SK-N-SH (cell line): ENCODE measurements at regions of chr22 and their contacts with region 1.

Region 1: DNA sequence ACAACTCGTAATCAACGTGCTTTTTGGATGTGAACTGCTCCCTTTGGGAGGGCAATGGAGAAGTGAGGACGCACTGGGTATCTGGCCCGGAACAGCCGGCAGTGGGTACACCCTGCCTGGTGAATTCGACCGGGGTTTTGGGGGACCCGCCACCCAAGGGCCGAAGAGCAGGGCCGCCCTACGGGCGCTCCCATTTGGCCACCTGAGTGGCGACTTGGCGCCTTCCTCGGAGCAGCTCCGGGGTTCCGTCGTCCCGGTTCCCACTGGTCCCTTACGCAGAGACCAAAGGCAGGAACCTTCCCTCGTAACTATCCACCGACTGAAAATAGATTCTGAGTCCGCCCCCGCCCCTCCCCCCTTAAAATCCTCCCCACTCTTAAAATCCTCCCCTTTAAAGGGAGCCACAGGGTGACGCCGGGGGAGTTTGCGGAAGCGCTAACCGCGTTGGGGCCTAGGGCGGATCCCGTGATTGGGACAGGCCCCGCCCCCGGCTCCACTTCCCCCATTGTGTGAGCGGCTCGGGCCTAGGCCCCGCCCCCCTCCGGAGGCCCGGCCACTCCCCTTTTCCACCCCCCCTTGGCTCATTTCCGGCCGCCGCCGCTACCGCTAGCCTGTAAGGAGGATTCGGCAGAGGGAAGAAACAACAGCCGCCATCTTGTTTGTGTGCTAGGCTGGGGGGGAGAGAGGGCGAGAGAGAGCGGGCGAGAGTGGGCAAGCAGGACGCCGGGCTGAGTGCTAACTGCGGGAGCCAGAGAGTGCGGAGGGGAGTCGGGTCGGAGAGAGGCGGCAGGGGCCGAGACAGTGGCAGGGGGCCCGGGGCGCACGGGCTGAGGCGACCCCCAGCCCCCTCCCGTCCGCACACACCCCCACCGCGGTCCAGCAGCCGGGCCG is 1.0 kb upstream of the EP300 start:
- DNase-seq: peak; percentile 93
- H3K4me3 ChIP-seq: peak overlapping the region; percentile 62 to 65
- H3K27ac ChIP-seq: peak overlapping the region; percentile 95
- H3K4me1 ChIP-seq: peaks cover 0 to 2% of the 10 kb centered on the region in 2 experiments; a peak in 3 of 4 replicates
- H3K27me3 ChIP-seq: no peaks in the 10 kb centered on the region
- CTCF ChIP-seq: no peak
- EP300 ChIP-seq: peak in 1 of 2 experiments; percentile 22; a peak in 1 of 4 replicates
- RAD21 ChIP-seq: no peak

Region 2: GRCh38 chr22:40950962-40951794 is 140.2 kb before region 1 on chr22 and contains the start of gene RBX1:
- CTCF ChIA-PET with region 1: no interaction called
- POLR2A ChIA-PET with region 1: interaction called, 16 read pairs
- DNase-seq: peak; percentile 92
- H3K4me3 ChIP-seq: peak within 1 kb of the TSS; percentile 60 to 72
- H3K27ac ChIP-seq: peak within 1 kb of the TSS; percentile 81 to 86
- H3K4me1 ChIP-seq: no peaks in the 10 kb centered on the region; a peak in 2 of 4 replicates
- H3K27me3 ChIP-seq: no peaks in the 10 kb centered on the region
- CTCF ChIP-seq: no peak
- EP300 ChIP-seq: no peak
- RAD21 ChIP-seq: no peak
- polyA plus RNA-seq, gene RBX1: 51.2 and 53.7 TPM in 2 replicates